ENCODE measurements at regions of chr10 and their contacts with region 1.

Region 1: DNA sequence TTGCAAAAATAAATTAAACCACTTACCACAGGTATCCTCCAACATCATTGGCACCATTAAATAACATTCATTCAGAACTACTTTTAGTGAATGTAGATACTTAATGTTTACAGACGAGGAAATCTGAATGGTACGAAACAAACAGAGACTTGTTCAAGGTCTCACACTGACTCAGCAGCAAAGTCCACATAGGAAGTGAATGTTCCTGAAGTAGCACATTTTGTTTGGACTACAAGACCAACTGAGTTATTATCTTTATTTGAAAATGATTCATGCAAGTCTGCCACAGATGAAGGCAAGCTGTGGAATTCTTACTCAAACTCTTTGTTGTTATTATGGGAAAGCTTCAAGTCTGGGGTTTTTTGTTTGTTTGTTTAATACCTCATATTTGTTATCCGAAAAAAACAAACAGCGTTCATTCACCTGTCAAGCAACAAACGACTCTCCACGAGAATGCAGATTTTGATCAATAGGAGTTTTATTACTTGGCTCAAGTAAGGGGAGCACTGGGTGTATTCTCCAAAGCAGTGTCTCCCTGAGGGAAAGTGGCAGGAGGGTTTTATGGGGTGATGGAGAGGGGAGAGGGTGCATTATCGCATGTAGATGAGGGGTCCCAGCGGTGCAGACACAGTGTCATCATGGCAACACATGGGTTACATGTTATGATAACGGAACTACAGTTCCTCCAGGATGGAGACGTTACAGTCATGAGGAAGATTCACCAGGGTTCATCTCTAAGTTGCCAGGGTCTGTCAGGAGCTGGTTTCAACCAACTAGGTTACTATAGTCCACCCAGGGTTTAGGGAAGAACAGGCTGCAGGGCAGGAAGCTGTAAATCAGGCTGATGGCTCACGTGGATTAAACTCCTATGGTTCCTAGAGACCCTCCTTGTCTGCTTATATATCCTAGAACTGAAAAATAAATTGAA is 147.7 kb upstream of the AKR1E2 start:
- DNase-seq: no peak
- H3K4me3 Mint-ChIP-seq: peak overlapping the region; percentile 48
- H3K27ac Mint-ChIP-seq: peak overlapping the region; percentile 96
- H3K4me1 Mint-ChIP-seq: peaks cover 59% of the 10 kb centered on the region
- H3K27me3 Mint-ChIP-seq: no peaks in the 10 kb centered on the region
- CTCF ChIP-seq: no peak

Region 2: DNA sequence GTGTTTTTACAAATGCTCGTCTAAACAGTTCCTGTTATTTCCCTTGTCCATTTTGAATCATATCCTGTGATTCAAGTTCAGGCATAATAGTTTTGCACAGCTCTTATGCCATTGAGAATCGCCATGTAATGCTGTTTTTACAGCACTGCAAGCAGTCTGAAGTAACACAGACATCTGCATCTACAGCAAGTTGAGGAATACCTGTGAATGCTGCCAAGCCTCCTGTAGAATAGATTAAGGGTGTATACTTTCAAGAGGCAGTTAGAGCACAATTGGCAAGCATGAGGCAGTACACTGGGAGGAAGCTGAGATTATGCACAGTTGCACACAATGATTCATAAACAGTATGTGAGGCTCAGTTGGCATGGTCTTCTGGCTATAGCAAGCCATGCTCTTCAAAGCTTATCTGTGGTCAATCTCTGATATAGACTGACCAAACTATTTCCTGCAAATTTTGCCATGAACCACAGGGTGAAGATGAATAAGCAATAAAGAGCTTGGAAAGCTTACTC is 25.8 kb after region 1 on chr10:
- CTCF ChIA-PET with region 1: interaction called, 6 read pairs
- intact Hi-C with region 1: loop called (anchors 2 kb)
- DNase-seq: peak; percentile 61
- H3K4me3 Mint-ChIP-seq: peak overlapping the region; percentile 36
- H3K27ac Mint-ChIP-seq: peak overlapping the region; percentile 98
- H3K4me1 Mint-ChIP-seq: peaks cover 55% of the 10 kb centered on the region
- H3K27me3 Mint-ChIP-seq: no peaks in the 10 kb centered on the region
- CTCF ChIP-seq: no peak

Region 3: DNA sequence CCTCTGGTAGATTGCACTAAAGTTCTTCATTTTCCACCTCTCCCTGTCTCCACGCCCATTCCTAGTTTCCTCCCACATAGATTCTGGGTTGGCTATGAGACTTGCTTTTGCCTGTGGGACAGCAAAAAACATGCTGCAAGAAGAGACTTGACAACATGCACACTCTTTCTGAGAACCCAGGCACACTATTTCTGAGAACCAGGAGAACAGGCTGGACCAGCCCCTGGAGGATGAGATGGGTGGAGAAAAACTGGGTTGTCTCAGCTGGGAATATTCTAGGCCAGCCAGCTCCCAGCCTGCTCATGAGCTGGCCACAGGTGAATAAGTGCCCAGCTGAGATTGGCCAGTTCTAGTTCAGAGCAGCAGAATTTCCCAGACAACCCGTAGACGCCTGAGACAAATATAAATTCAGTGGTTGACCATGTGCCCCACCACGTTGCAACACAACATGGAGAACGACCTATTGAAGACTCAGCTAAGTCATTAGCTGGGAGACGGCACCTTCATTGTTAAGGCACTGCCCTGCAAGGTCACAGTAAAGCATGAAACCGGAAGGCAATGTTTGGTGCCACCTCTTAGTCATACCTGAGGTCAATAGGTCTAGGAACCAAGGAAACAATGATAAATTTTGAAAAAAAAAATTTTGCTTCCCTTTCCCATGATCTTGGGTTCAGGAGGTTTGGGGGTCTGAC is 55.0 kb after region 1 on chr10:
- CTCF ChIA-PET with region 1: no interaction called
- intact Hi-C with region 1: loop called (anchors 2 kb)
- DNase-seq: peak; percentile 81
- H3K4me3 Mint-ChIP-seq: peak overlapping the region; percentile 61
- H3K27ac Mint-ChIP-seq: peak overlapping the region; percentile 99
- H3K4me1 Mint-ChIP-seq: peaks cover 54% of the 10 kb centered on the region
- H3K27me3 Mint-ChIP-seq: no peaks in the 10 kb centered on the region
- CTCF ChIP-seq: no peak